ENCODE measurements at regions of chr16 and their contacts with region 1.

Region 1: DNA sequence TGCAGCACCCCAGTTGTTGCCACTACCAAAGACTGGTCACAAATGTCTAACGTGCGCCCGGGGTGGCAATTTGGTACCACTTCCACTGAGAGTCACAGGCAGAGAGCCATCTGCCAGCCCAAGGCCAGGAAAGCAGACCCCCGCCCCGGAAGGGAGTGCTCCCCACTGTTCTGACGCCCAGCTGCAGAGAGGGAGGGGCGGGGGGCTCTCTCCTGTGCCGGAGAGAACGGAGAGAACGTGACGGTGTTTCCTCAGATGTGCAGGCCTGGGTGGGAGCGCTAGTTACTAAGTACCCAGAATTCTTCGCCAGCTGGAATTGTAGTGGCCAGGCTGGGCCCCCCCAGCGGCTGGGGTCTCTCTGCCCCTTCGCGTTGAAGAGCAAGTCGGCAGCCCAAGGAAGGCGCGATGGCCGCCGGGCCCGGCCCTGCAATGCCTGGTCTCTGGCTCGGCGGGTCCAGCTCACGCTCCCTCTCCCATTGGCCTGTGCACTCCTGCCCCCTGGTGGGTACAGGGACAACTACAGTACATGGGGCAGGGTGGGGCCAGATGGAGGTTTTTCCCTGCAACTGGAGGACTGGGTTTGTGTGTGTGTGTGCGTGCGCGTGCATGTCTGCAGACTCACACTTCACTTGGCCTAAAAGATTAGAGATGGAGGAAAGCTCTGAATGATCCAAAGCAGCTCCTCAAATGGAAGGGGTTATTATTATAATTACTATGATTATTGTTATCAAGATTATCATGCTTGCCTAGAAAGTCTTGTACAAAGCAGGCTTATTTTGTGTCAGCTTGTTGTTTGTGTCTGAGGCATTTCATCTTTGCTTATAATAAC is 107.1 kb downstream of the AMFR start:
- DNase-seq: peak; percentile 84
- ATAC-seq: peak; percentile 97
- H3K4me3 Mint-ChIP-seq: no peak overlapping the region
- H3K27ac Mint-ChIP-seq: no peak overlapping the region
- H3K4me1 Mint-ChIP-seq: peaks cover 11% of the 10 kb centered on the region
- H3K27me3 Mint-ChIP-seq: peaks cover 5% of the 10 kb centered on the region

Region 2: GRCh38 chr16:55944377-55944802 is 373.8 kb before region 1 on chr16:
- CTCF ChIA-PET with region 1: interaction called, 39 read pairs
- POLR2A ChIA-PET with region 1: no interaction called
- DNase-seq: peak; percentile 58
- ATAC-seq: peak; percentile 71
- H3K4me3 Mint-ChIP-seq: no peak overlapping the region
- H3K27ac Mint-ChIP-seq: no peak overlapping the region
- H3K4me1 Mint-ChIP-seq: no peaks in the 10 kb centered on the region
- H3K27me3 Mint-ChIP-seq: peaks cover 20% of the 10 kb centered on the region

Region 3: DNA sequence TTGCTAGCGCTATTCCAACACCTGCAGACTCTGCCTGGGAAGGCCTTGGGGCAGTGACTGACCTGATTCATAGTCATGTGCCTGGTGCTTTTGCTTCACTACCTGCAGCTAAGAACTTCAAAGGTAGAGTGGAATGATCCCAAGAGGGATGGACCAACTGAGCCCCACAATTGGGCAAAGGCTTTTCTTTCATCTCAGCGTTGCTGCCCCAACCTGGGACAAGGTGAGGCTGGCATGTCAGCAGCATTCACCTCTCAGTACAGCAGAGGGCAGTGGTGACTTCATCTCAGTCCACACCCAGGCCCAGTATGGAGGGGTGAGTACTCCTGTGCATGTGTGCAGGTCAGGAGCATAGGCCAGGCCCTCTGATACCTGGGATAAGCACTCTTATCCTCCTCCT is 276.5 kb before region 1 on chr16:
- CTCF ChIA-PET with region 1: interaction called, 22 read pairs
- POLR2A ChIA-PET with region 1: no interaction called
- DNase-seq: peak; percentile 41
- ATAC-seq: peak; percentile 67
- H3K4me3 Mint-ChIP-seq: no peak overlapping the region
- H3K27ac Mint-ChIP-seq: no peak overlapping the region
- H3K4me1 Mint-ChIP-seq: no peaks in the 10 kb centered on the region
- H3K27me3 Mint-ChIP-seq: peaks cover 21% of the 10 kb centered on the region

Region 4: DNA sequence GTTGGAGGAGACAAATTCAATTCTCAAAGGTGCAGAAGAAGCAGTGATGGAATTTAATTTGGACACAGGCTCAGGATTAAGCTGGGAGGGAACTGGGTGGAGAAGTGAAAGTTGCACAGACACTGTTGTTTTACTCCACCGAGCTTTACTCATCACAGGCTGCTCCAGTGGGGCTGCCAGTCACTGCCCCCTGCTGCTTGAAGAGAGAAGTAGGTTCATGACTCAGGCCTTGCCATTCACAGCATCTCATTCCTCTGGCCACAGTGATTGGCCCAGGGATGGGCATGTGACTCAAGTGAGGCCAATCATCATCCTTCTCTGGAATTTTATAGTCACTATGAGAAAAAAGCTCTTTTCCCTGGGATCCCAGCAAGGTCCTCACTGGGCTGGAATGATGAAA is 115.2 kb before region 1 on chr16:
- CTCF ChIA-PET with region 1: interaction called, 16 read pairs
- POLR2A ChIA-PET with region 1: no interaction called
- DNase-seq: peak; percentile 65
- ATAC-seq: peak; percentile 66
- H3K4me3 Mint-ChIP-seq: no peak overlapping the region
- H3K27ac Mint-ChIP-seq: no peak overlapping the region
- H3K4me1 Mint-ChIP-seq: no peaks in the 10 kb centered on the region
- H3K27me3 Mint-ChIP-seq: peaks cover 9% of the 10 kb centered on the region

Region 5: GRCh38 chr16:56281256-56281805 is 36.9 kb before region 1 on chr16:
- CTCF ChIA-PET with region 1: interaction called, 15 read pairs
- POLR2A ChIA-PET with region 1: no interaction called
- DNase-seq: peak; percentile 26
- ATAC-seq: no peak
- H3K4me3 Mint-ChIP-seq: no peak overlapping the region
- H3K27ac Mint-ChIP-seq: no peak overlapping the region
- H3K4me1 Mint-ChIP-seq: peaks cover 24% of the 10 kb centered on the region
- H3K27me3 Mint-ChIP-seq: no peaks in the 10 kb centered on the region

Region 6: DNA sequence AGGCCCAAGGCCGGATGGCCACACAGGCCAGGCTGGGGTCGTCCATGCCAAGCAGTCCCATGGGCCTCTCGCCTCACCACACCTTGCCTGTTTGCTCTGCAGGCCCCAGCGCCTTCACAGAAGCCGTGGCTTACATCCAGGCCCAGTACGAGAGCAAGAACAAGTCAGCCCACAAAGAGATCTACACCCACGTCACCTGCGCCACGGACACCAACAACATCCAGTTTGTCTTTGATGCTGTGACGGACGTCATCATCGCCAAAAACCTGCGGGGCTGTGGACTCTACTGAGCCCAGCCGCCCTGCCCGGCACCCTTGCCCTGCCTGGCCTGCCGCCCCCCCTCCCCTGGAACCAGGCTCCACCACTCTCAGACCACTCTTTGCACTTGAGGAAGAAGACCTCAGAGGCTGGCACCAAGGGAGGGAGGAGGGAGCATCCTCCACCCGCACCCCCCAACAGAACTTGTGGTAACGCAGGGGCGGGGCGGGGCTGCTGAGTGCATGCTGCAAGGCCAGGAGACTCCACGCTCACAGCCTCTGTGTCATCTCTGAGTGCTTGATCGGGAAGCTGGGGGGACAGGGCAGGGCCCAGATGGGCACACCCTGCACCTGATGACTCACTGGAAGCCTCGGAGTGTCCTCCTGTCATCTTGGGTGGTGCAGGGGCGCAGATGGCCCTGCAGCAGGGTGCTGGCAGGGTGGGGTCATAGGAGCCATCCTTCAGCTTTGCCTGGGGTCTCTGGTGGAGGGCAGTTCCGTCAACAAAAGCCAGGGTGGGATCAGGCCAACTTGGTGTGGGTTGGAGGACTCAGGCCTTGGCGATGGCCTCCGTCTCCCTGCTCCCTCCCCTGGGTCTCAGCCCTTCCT is 25.7 kb after region 1 on chr16:
- CTCF ChIA-PET with region 1: no interaction called
- POLR2A ChIA-PET with region 1: no interaction called
- DNase-seq: no peak
- ATAC-seq: no peak
- H3K4me3 Mint-ChIP-seq: no peak overlapping the region
- H3K27ac Mint-ChIP-seq: no peak overlapping the region
- H3K4me1 Mint-ChIP-seq: no peaks in the 10 kb centered on the region
- H3K27me3 Mint-ChIP-seq: no peaks in the 10 kb centered on the region

Region 7: DNA sequence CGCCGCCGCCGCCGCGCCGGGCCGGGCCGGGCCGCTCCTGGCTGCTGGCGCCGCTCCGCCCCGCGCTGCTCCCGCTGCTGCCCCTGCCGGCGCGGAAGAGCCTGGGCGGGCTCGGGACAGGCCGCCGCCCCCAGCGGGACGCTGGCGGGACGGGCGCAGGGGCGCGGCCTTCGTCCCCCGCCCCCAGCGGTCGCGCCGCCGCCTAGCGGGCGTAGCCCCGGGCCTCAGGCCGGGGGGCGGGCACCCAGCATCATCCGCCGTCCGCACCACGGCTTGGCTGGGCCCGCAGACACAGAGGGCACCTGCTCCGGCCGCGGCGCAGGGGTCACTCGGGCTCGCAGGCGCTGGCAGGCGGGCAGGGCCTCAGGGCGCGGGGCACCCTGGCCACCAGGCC is 107.2 kb after region 1 on chr16 and contains the start of gene AMFR:
- CTCF ChIA-PET with region 1: no interaction called
- POLR2A ChIA-PET with region 1: no interaction called
- DNase-seq: peak; percentile 67
- ATAC-seq: peak; percentile 99
- H3K4me3 Mint-ChIP-seq: peak within 1 kb of the TSS; percentile 91
- H3K27ac Mint-ChIP-seq: peak within 1 kb of the TSS; percentile 78
- H3K4me1 Mint-ChIP-seq: peaks cover 41% of the 10 kb centered on the region
- H3K27me3 Mint-ChIP-seq: no peaks in the 10 kb centered on the region
- total RNA-seq, gene AMFR: 39.0 to 47.5 TPM

Region 8: DNA sequence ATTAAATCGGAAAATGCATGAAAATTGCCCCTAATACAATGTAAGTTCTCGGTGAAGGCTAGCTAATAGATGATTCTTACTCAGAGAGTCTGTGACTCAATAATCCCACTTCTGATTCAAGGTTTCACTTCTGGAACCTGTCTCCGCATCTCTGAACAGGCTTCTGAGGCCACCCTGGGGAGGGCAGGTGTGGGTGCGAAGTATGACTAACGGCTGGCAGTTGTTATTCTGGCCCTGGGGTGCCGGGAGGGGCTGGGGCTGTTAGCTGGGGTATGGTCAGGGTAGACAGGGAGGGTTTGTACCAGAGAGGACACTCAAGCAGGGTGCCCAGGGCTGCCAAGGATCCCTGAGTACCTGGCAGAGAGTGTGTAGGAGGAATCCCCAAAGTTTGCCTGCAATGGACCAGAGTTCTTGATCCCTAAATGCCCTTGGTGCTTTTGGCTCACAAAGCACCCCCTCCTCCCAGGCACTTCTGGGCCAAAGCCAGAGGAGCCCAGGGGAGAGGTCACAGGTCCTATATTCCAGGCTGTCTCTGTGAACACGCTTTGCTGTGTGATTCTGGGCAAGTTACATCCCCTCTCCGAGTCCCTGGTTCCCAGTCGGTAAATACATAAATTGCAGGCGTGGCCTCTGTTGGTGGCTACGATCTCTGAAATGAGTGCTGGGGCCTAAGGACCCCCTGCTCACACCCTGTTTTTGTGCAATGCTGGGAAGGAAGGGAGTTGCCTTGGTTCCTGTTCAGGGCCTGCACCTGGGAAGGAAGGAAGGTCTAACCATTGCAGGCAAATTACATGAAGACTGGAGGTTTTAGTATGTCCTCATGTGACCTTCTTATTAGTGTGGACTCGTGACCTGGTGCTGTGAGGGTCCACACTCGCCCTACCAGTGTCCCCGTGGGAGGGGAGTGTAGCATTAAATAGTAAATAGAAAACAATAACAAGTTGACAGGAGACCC is 724.2 kb after region 1 on chr16:
- CTCF ChIA-PET with region 1: no interaction called
- POLR2A ChIA-PET with region 1: no interaction called
- DNase-seq: peak; percentile 78
- ATAC-seq: peak; percentile 54
- H3K4me3 Mint-ChIP-seq: peak overlapping the region; percentile 64
- H3K27ac Mint-ChIP-seq: peak overlapping the region; percentile 97
- H3K4me1 Mint-ChIP-seq: peaks cover 73% of the 10 kb centered on the region
- H3K27me3 Mint-ChIP-seq: no peaks in the 10 kb centered on the region